Body of pancreas (tissue), 4 donors: ENCODE measurements at regions of chr12 and their contacts with region 1.

Region 1: DNA sequence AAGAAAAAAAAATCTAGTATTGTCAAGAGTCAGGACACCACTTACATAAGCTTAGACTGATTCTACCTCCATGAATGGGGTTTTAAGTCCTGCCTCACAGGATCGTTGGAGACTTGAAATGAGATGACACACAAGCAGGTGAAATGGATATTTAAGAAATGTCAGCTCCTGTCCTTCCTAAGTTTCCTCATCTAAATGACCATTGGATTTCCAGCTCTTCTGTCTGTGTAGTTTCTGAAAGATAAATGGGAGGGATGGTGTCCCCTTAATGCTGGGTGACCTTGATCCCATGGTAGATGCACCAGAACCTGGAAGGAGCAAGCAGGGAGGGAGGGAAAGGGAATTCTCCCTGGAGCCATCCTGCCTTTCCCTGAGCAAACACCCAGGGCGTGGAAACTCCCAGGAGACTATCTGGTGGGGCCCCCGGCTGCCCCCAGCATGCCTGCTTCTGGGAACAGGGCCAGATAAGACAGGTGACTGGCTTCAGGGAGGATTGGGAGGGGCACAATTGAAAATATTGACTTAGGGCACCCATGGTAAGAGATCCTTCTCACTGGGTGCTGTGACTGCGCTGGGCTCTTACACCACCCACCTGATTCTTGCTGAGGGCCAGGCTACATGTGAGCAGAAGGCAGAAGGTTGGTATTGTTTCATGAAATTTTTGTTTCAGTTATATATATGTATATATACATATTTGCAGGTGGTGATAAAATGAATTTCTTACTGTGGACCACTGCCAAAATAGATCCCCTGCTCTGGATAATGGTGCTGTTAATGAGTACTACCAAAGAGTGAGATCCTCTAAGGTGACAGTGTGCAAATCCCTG is 9.6 kb downstream of the KRT8 start:
- DNase-seq: peak; percentile 65 to 85 (median 80)
- ATAC-seq: peak; percentile 67
- H3K4me3 ChIP-seq: no peak overlapping the region
- H3K27ac ChIP-seq: peak overlapping the region; percentile 47 to 67 (median 56)
- H3K4me1 ChIP-seq: peaks cover 51% of the 10 kb centered on the region
- H3K27me3 ChIP-seq: no peaks in the 10 kb centered on the region
- CTCF ChIP-seq: no peak
- POLR2A ChIP-seq: peak in 1 of 3 donors; percentile 17

Region 2: GRCh38 chr12:52969828-52970569 is 74.7 kb after region 1 on chr12:
- intact Hi-C with region 1: loop called (anchors 5 kb)
- DNase-seq: peak; percentile 75 to 99 (median 95)
- ATAC-seq: peak; percentile 63
- H3K4me3 ChIP-seq: no peak overlapping the region
- H3K27ac ChIP-seq: peak overlapping the region; percentile 56 to 73 (median 62)
- H3K4me1 ChIP-seq: peaks cover 31% of the 10 kb centered on the region
- H3K27me3 ChIP-seq: no peaks in the 10 kb centered on the region
- CTCF ChIP-seq: peak in 1 of 7 experiments; percentile 14
- POLR2A ChIP-seq: no peak